ENCODE measurements at regions of chr19 and their contacts with region 1.

Region 1: GRCh38 chr19:36687214-36688056 is at the start of gene ZNF567:
- DNase-seq: peak; percentile 99
- ATAC-seq: peak; percentile 96 to 97
- H3K4me3 ChIP-seq: peak within 1 kb of the TSS; percentile 66
- H3K27ac ChIP-seq: peak within 1 kb of the TSS; percentile 72 to 88
- H3K4me1 ChIP-seq: peaks cover 4% of the 10 kb centered on the region; the same call in 1 of the 3 replicates
- CTCF ChIP-seq: no peak
- EP300 ChIP-seq: peak in 1 of 2 experiments; percentile 14; a peak in 1 of 5 replicates
- POLR2A ChIP-seq: peak; percentile 93
- RAD21 ChIP-seq: no peak; a peak in 1 of 5 replicates
- polyA plus RNA-seq, gene ZNF567: 16.3 and 19.0 TPM in 2 replicates

Region 2: DNA sequence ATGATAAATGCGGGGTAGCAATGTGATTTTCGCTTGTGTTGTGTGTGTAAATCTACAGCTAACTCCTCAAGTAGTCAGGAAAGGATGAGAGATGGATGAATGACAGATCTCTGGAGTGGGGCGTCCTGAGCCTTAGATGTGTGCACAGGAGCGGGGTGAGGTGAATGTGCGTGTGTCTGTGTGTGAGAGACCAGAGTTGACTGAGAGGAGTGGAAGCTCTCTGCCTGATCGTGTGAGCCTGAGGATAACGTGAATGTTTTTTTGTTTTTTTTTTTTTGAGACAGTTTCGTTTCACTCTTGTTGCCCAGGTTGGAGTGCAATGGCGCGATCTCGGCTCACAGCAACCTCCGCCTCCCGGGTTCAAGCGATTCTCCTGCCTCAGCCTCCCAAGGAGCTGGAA is 21.6 kb before region 1 on chr19:
- CTCF ChIA-PET with region 1: interaction called, 3 read pairs
- POLR2A ChIA-PET with region 1: interaction called, 11 read pairs
- DNase-seq: no peak
- ATAC-seq: no peak
- H3K4me3 ChIP-seq: peak overlapping the region; percentile 77
- H3K27ac ChIP-seq: peak overlapping the region; percentile 79 to 85
- H3K4me1 ChIP-seq: no peaks in the 10 kb centered on the region
- CTCF ChIP-seq: no peak
- EP300 ChIP-seq: no peak
- POLR2A ChIP-seq: no peak
- RAD21 ChIP-seq: no peak

Region 3: DNA sequence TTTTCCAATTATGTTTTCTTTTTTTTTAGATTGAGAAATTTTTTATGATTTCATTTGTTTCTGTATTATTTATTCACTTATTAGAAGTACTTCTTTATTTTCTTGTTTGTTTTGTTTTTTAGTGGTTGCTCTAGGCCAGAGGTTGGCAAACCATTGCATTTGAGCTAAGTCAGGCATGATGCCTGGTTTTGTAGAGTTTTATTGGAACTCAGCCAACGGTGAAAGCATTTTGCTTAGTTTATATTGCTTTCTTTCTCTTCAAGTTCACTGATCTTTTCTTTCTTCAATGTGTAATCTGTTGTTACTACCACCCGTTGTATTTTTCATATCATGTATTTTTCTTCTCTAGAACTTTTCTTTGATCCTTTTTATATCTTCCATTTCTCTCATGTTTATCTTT is 19.7 kb after region 1 on chr19:
- CTCF ChIA-PET with region 1: no interaction called
- POLR2A ChIA-PET with region 1: no interaction called
- DNase-seq: no peak
- ATAC-seq: no peak
- H3K4me3 ChIP-seq: no peak overlapping the region
- H3K27ac ChIP-seq: no peak overlapping the region
- H3K4me1 ChIP-seq: no peaks in the 10 kb centered on the region
- CTCF ChIP-seq: no peak
- EP300 ChIP-seq: no peak
- POLR2A ChIP-seq: no peak
- RAD21 ChIP-seq: no peak